Right ventricle myocardium inferior (tissue), 1 donor: ENCODE measurements at regions of chr4 and their contacts with region 1.

Region 1: DNA sequence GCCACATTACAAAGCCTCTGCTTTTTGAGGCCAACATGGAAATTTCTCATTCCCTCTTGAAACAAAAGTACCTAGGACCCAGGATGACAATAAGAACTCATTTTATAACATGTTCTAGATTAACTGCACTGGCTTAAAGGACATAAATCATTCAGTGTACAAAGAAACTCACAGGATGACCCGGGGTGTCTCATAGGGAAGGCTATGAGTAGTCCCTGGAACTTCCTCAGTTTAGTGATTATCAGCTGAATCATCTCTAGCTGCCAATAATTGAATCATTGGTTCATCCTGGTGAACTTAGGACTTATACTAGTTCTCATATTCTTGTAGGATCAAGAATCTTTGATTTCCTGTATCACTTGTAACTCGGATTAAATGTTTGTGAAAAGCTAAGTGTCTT is 95.8 kb upstream of the WDR1 start:
- DNase-seq: no peak
- ATAC-seq: no peak

Region 2: GRCh38 chr4:10096201-10096977 is 116.0 kb before region 1 on chr4:
- intact Hi-C with region 1: no loop called
- DNase-seq: peak; percentile 80
- ATAC-seq: peak; percentile 71

Region 3: GRCh38 chr4:10157478-10158332 is 54.7 kb before region 1 on chr4:
- intact Hi-C with region 1: no loop called
- DNase-seq: no peak
- ATAC-seq: peak; percentile 40

Region 4: DNA sequence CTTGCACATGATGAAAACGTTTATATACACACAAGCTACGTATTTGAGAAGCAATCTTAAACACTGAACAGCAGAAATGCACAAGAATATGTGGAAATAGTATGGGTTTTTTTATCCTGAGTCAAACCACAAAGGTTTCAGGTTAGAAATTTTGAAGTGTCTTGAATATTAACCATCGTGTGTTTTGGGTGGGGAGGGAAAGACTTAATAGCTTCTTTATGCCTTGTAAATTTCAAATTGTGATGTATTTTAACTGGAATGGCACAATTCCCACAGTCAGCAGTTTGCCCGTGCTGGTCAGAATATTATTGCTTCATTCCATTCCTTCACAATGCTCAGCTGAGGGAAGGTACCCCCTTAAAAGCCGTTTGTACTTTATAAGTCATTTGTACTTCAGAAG is 28.4 kb before region 1 on chr4:
- intact Hi-C with region 1: loop called (anchors 1 kb)
- DNase-seq: no peak
- ATAC-seq: no peak